Endothelial cell of umbilical vein (primary cell): ENCODE measurements at regions of chr4 and their contacts with region 1.

Region 1: GRCh38 chr4:80184053-80184790 is 13.1 kb upstream of the PRDM8 start:
- DNase-seq: peak; percentile 58
- H3K4me3 ChIP-seq: peak overlapping the region; percentile 56 to 99 (median 68)
- H3K27ac ChIP-seq: no peak overlapping the region
- H3K4me1 ChIP-seq: peaks cover 27% of the 10 kb centered on the region
- H3K27me3 ChIP-seq: peaks cover 43 to 48% of the 10 kb centered on the region in 2 experiments
- CTCF ChIP-seq: peak; percentile 83 to 91
- POLR2A ChIP-seq: no peak

Region 2: GRCh38 chr4:79917246-79917645 is 267.0 kb before region 1 on chr4:
- CTCF ChIA-PET with region 1: interaction called, 9 read pairs
- POLR2A ChIA-PET with region 1: no interaction called
- dilution Hi-C with region 1: no loop called
- intact Hi-C with region 1: loop called (anchors 1 kb)
- DNase-seq: peak; percentile 62
- H3K4me3 ChIP-seq: no peak overlapping the region
- H3K27ac ChIP-seq: no peak overlapping the region
- H3K4me1 ChIP-seq: no peaks in the 10 kb centered on the region
- H3K27me3 ChIP-seq: no peaks in the 10 kb centered on the region
- CTCF ChIP-seq: peak; percentile 73 to 78
- POLR2A ChIP-seq: no peak

Region 3: GRCh38 chr4:80125252-80126177 is 58.7 kb before region 1 on chr4:
- CTCF ChIA-PET with region 1: interaction called, 104 read pairs
- POLR2A ChIA-PET with region 1: no interaction called
- dilution Hi-C with region 1: no loop called
- intact Hi-C with region 1: loop called (anchors 1 kb)
- DNase-seq: peak; percentile 65
- H3K4me3 ChIP-seq: no peak overlapping the region
- H3K27ac ChIP-seq: peak overlapping the region; percentile 82
- H3K4me1 ChIP-seq: peaks cover 43% of the 10 kb centered on the region
- H3K27me3 ChIP-seq: no peaks in the 10 kb centered on the region
- CTCF ChIP-seq: peak; percentile 40
- POLR2A ChIP-seq: no peak

Region 4: GRCh38 chr4:80173401-80173800 is 10.8 kb before region 1 on chr4:
- CTCF ChIA-PET with region 1: interaction called, 24 read pairs
- POLR2A ChIA-PET with region 1: no interaction called
- dilution Hi-C with region 1: no loop called
- intact Hi-C with region 1: no loop called
- DNase-seq: peak; percentile 76
- H3K4me3 ChIP-seq: no peak overlapping the region
- H3K27ac ChIP-seq: peak overlapping the region; percentile 48
- H3K4me1 ChIP-seq: peaks cover 13% of the 10 kb centered on the region
- H3K27me3 ChIP-seq: no peaks in the 10 kb centered on the region
- CTCF ChIP-seq: no peak
- POLR2A ChIP-seq: no peak

Region 5: GRCh38 chr4:80196922-80197573 is 12.8 kb after region 1 on chr4 and contains the start of gene PRDM8:
- CTCF ChIA-PET with region 1: interaction called, 93 read pairs
- POLR2A ChIA-PET with region 1: interaction called, 4 read pairs
- dilution Hi-C with region 1: no loop called
- intact Hi-C with region 1: loop called (anchors 1 kb)
- DNase-seq: no peak
- H3K4me3 ChIP-seq: peak within 1 kb of the TSS in 2 of 3 experiments; percentile 8 to 15
- H3K27ac ChIP-seq: no peak within 1 kb of the TSS
- H3K4me1 ChIP-seq: peaks cover 19% of the 10 kb centered on the region
- H3K27me3 ChIP-seq: peaks cover 76 to 95% of the 10 kb centered on the region in 2 experiments
- CTCF ChIP-seq: no peak
- POLR2A ChIP-seq: no peak
- total RNA-seq, gene PRDM8: 0.42 and 0.82 TPM in 2 replicates